Tibial artery (tissue), 4 donors: ENCODE measurements at regions of chrX and their contacts with region 1.

Region 1: DNA sequence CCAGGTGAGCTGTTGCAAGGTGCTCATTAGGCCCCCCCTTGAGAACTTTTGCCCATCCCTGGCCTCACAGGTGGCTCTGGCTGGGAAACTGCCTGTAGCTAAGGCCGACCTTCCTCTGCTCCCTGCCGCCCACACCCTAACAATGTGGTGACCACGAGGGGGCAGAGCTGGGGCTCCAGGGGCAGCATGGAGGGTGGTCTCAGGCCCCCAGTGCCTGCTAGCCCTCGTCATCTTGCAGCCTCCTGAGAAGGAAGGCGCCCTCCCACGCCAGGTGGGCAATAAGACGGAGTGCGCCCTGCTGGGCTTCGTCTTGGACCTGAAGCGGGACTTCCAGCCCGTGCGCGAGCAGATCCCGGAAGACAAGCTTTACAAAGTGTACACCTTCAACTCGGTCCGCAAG is 32.4 kb downstream of the ATP2B3 start:
- DNase-seq: no peak
- H3K4me3 ChIP-seq: no peak overlapping the region
- H3K27ac ChIP-seq: no peak overlapping the region
- H3K4me1 ChIP-seq: no peaks in the 10 kb centered on the region
- H3K27me3 ChIP-seq: no peaks in the 10 kb centered on the region
- CTCF ChIP-seq: no peak

Region 2: DNA sequence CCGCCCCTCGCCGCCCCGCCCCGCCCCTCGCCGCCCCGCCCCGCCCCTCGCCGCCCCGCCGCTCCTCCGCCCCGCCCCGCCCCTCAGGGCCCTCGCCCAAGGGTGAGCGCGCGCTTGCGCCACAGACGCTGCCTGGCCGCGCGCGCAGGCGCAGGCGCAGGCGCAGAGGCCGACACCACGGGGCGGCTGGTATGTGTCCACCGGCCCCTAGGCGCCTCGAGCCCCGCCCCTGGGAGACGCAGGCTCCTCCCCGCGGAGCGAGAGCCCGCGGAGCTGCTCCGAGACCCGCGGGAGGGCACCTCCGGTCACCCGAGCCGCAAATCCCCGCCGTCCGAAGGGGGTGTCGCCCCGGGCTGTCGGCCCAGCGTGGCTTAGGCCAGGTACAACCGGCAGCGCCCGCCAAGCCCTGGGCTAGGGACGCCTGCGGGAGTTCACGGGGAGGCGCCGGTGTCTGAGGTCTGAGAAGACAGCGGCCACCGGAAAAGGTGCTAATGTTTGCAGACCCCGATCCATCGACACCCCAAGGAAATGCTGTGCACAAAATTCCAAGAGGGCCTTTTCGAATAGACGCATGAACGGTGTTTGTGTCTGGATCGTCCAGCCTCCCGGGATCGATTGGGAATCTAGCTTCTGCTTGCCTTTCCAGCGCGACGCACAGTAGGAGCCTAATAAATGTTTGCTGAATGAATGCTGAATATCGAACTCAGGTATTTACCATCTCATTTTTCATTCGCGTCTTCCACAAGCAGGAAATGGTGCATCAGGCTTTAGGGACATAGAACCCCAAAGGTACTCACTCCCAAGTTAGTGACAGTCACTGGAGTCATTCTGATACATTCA is 49.6 kb after region 1 on chrX:
- intact Hi-C with region 1: loop called (anchors 10 kb)
- DNase-seq: peak; percentile 78 to 92
- H3K4me3 ChIP-seq: peak overlapping the region; percentile 67 to 75
- H3K27ac ChIP-seq: peak overlapping the region; percentile 64 to 73
- H3K4me1 ChIP-seq: peaks cover 0 to 21% (median 6%) of the 10 kb centered on the region in 4 donors
- H3K27me3 ChIP-seq: no peaks in the 10 kb centered on the region
- CTCF ChIP-seq: no peak